ENCODE measurements at regions of chr13 and their contacts with region 1.

Region 1: GRCh38 chr13:94674609-94675348 is 37.6 kb downstream of the SOX21 start:
- DNase-seq: peak; percentile 51
- H3K4me3 ChIP-seq: no peak overlapping the region
- H3K27ac ChIP-seq: no peak overlapping the region
- H3K4me1 ChIP-seq: no peaks in the 10 kb centered on the region
- H3K27me3 ChIP-seq: peaks cover 23% of the 10 kb centered on the region

Region 2: DNA sequence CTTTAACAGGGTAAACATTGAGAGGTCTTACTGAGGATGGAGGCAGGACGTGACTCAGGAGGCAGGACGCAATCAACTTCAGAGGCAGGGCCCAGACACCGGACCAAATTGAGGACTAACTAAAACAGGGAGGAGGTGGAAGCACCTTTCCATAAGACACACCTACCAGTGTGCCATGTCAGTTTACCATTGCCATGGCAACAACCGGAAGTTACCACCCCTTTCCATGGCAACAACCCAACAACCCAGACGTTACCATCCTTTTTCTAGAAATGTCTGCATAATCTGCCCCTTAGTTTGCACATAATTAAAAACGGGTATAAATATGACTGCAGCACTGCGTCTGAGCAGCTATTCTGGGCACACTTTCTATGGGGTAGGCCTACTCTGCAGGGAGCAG is 91.0 kb after region 1 on chr13:
- in situ Hi-C with region 1: no loop called
- DNase-seq: no peak
- H3K4me3 ChIP-seq: no peak overlapping the region
- H3K27ac ChIP-seq: no peak overlapping the region
- H3K4me1 ChIP-seq: no peaks in the 10 kb centered on the region
- H3K27me3 ChIP-seq: no peaks in the 10 kb centered on the region

Region 3: DNA sequence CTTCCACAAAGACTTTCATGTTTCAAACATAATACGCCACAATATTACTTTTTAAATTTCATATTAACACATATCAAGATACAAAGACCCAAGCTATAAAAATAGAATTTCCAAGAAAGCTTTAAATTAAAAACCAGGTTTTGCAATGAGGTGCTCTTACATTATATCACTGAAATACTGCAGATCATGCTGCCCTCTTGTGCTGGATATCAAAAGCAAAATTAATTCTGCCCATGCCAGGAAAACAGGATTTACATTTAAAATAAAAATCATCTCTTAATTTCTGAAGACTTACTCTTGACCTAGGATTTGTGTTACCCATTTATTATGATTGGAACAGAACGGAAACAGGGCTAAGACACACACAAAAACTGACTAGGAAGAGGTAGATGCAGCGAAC is 481.4 kb after region 1 on chr13:
- in situ Hi-C with region 1: loop called (anchors 25 kb)
- DNase-seq: peak; percentile 42
- H3K4me3 ChIP-seq: no peak overlapping the region
- H3K27ac ChIP-seq: no peak overlapping the region
- H3K4me1 ChIP-seq: peaks cover 9% of the 10 kb centered on the region; the same call in 1 of the 2 replicates
- H3K27me3 ChIP-seq: no peaks in the 10 kb centered on the region

Region 4: DNA sequence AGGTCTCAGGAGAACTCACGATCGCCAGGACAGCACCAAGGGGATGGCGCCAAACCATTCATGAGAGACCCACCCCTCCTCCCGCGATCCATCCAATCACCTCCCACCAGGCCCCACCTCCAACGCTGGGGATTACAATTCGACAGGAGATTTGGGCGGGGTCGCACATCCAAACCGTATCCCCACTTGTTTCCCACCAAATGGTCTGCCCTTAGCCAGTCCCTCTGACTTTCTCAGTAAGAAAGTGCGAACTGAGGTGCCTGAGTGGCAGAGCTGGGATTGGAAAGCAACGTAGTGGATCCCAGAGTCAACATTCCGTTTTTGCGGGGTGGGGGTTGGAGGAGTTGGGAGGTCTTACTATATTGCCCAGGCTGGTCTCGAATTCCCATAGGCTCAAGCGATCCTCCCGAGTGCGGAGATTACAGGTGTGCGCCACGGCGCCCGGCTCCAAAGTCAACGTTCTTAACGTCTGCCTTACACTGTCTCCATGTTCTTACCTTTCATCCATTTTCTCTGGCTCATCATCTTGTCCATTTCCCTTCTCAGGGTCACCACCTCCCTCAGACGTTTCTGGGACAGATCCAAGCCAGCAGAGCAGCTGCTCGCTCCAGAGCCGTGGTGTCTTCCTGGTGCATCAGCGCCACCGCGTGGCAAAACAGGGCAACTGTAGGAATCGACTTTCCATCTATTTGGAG is 729.2 kb after region 1 on chr13:
- in situ Hi-C with region 1: loop called (anchors 25 kb)
- DNase-seq: peak; percentile 83
- H3K4me3 ChIP-seq: peak overlapping the region; percentile 43
- H3K27ac ChIP-seq: no peak overlapping the region
- H3K4me1 ChIP-seq: no peaks in the 10 kb centered on the region
- H3K27me3 ChIP-seq: no peaks in the 10 kb centered on the region; the same call in 1 of the 2 replicates